ENCODE measurements at regions of chr12 and their contacts with region 1.

Region 1: GRCh38 chr12:62799126-62799736 is 135.7 kb downstream of the PPM1H start:
- DNase-seq: peak; percentile 74
- H3K4me3 ChIP-seq: no peak overlapping the region
- H3K27ac ChIP-seq: no peak overlapping the region
- H3K4me1 ChIP-seq: no peaks in the 10 kb centered on the region
- H3K27me3 ChIP-seq: no peaks in the 10 kb centered on the region

Region 2: DNA sequence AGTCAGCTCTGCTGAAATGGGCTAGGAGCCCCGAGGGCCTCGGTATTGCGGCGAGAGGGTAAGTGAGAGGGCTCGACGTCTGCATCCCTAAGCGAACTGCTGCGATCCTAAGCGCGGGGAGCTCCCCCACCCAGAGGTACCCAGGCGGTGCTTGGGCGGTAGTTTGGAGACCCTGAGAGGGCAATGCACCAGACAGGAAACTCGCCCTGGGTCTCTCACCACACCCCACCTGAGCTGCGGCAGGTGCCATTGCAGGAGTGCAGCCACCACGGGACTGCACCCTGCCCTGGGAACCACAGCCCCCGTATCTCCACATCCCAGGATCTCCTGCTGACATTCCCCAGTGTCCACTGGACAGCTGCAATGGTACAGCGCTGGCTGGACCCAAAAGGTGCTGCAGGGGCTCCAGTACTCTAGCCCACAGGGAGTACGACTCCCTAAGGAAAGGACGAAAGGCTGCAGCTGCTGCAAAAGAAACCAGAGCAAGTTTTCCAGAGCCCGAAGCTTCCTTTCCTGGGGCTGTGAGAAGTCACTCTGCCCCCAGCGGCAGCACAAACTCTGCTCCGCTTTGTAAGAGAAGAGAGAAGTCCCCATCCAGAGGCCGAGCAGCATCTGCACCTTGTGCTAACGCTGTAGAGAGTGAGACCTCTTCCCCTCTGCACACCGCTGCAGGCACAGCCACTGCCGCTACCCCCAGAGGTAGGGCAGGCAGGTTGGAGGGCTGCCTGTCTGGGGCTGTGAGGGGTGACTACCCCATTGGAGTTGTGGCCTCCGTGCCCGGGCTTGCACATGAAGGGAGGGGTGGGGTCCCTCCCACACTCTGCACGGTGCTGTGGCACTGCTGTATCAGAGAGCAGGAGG is 363.7 kb before region 1 on chr12:
- in situ Hi-C with region 1: loop called (anchors 10 kb)
- DNase-seq: peak; percentile 81
- H3K4me3 ChIP-seq: peak overlapping the region; percentile 79
- H3K27ac ChIP-seq: no peak overlapping the region
- H3K4me1 ChIP-seq: no peaks in the 10 kb centered on the region
- H3K27me3 ChIP-seq: 0 out of 2 replicates have a peak, but pooled peaks cover 15% of the 10 kb centered on the region

Region 3: GRCh38 chr12:62581288-62582064 is 217.8 kb before region 1 on chr12:
- in situ Hi-C with region 1: loop called (anchors 10 kb)
- DNase-seq: peak; percentile 74
- H3K4me3 ChIP-seq: no peak overlapping the region
- H3K27ac ChIP-seq: no peak overlapping the region
- H3K4me1 ChIP-seq: peaks cover 6% of the 10 kb centered on the region; the same call in 1 of the 2 replicates
- H3K27me3 ChIP-seq: no peaks in the 10 kb centered on the region